ENCODE measurements at regions of chr2 and their contacts with region 1.

Region 1: DNA sequence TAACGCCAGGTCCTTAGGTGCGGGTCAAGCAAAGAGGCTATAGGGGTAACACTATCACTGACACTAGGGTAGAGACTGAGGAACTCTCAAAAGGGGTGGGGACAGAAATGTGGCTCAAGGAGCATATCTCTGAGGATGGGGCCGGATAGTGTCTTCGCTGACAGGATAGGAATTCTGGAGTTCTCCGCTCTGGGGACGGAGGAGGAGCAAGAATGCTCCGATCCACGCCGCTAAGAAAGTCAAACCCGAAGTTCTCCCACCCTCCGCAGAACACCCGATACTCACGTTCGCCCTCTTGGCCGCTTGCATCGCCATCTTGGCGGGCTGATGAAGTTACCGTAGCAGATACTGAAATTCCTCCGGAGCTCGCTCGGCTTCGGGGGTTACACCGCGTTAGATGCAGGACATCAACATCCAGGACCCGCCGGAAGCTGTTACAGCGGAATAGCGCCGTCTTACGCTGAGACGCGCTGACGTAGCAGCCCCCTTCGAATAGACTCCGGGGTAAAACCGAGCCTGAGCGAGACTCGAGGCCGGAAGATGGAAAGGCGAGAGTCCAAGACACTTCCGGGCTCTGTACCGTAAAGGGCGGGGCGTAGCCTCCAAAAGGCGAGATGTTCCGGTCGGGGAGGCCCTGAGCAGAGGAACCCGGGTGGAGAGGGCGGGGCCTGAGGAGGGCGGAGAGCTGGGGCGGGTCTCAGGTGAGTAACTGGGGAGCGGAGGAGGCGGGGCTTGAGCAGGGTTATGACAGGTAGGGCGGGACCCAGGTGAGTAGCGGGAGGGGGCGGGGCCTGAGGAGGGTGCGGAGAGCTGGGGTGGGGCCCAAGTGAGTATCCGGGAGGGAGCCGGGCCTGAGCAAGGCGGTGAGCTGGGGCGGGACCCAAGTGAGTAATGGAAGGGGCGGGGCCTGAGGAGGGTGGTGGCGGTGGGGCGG is at the start of gene SF3B6:
- DNase-seq: peak; percentile 99
- H3K4me3 ChIP-seq: peak within 1 kb of the TSS; percentile 52 to 88 (median 66)
- H3K27ac ChIP-seq: peak within 1 kb of the TSS; percentile 91 to 96 (median 92)
- H3K4me1 ChIP-seq: peaks cover 0 to 22% (median 20%) of the 10 kb centered on the region in 4 donors
- H3K27me3 ChIP-seq: no peaks in the 10 kb centered on the region
- CTCF ChIP-seq: no peak
- EP300 ChIP-seq: peak in 1 of 4 donors; percentile 70
- POLR2A ChIP-seq: peak; percentile 44 to 56
- total RNA-seq, gene SF3B6: 95.6 to 140 (median 135) TPM

Region 2: DNA sequence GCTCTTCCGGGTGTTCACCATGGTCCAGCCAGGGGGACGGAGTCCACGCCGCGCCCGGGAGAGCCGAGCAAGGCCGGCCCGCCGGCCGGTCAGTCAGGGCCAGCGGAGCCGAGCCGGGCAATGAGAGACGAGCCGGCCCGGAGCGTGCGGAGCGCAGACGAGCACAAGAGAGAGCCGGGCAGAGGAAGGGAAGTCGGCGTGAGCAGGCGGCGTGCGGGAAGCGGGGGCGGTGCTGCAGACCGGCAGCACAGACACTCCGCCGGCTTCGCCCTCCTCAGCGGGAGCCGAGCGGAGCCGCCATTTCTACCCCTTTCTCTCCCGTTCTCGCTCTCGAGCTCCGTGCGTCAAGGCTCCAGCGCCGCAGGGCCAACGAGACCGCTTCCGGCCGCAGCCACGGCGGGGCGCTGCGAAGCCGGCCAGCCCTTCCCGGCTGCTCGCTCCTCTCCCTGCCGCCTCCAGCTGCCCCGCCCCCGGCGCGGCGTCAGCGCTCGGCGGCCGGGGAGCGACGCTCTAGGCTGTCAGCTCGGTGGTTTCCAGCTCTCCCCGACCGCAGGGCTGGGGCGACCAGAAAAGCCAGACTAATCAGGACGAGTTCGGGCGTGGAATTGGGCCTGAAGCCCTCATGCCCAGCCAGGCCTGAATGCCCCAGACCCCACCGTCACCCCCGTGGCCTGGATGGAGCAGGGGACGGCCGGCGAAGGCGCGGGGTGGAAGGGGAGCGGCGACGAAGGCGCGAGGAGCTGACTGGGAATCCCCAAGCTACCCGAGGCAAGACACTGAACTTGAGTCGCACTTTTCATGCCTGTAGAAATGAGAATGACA is 149.2 kb before region 1 on chr2 and contains the start of gene ATAD2B:
- intact Hi-C with region 1: loop called (anchors 2 kb)
- DNase-seq: peak; percentile 95
- H3K4me3 ChIP-seq: peak within 1 kb of the TSS; percentile 66 to 93 (median 82)
- H3K27ac ChIP-seq: peak within 1 kb of the TSS; percentile 93 to 99 (median 95)
- H3K4me1 ChIP-seq: peaks cover 0 to 38% (median 28%) of the 10 kb centered on the region in 4 donors
- H3K27me3 ChIP-seq: no peaks in the 10 kb centered on the region
- CTCF ChIP-seq: peak; percentile 47 to 84 (median 51)
- EP300 ChIP-seq: no peak
- POLR2A ChIP-seq: peak; percentile 58 to 85
- total RNA-seq, gene ATAD2B: 19.7 to 22.5 (median 21.0) TPM

Region 3: GRCh38 chr2:23939987-23940717 is 136.0 kb before region 1 on chr2 and contains the start of gene UBXN2A:
- intact Hi-C with region 1: loop called (anchors 2 kb)
- DNase-seq: peak; percentile 82
- H3K4me3 ChIP-seq: peak within 1 kb of the TSS; percentile 63 to 98 (median 84)
- H3K27ac ChIP-seq: peak within 1 kb of the TSS; percentile 87 to 98 (median 94)
- H3K4me1 ChIP-seq: peaks cover 0 to 20% (median 14%) of the 10 kb centered on the region in 4 donors
- H3K27me3 ChIP-seq: no peaks in the 10 kb centered on the region
- CTCF ChIP-seq: no peak
- EP300 ChIP-seq: no peak
- POLR2A ChIP-seq: peak; percentile 22 to 30
- total RNA-seq, gene UBXN2A: 15.0 to 21.2 (median 16.3) TPM

Region 4: DNA sequence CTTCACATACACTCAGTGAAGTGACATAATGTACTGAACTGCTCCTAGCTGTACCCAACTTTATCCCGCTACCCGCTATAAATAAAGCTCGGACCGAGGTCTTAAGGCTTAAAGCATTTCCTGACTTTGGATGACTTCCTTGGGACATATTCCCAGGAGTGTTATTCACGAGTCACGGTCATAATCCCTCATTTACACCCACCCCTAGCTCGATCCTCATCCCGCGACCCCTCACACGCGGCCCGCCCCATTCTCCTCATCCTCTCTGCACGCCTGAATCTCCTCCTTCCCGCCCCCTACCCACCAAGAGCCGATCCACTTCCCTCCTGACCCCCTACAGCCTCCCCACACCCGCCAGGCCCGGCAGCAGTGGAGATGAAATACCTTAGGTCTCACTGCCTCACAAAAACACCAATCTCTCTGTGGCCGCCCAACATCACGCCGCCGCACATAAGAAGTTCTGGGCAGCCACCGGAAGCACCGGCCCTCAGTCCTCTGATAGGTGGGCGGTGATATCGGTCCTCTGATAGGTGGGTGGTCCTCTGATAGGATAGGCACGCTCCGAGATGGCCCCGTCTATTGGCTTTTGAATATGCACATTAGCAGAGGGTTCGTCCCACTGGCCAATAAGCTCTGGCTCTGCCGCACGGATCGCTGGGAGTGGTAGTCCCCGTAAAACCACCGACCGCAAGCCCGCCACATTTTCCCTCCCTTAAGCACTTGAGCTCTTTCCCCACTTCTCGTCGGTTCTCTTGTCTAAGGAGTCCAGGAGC is 29.1 kb before region 1 on chr2 and contains the start of gene WDCP:
- intact Hi-C with region 1: loop called (anchors 2 kb)
- DNase-seq: peak; percentile 99
- H3K4me3 ChIP-seq: peak within 1 kb of the TSS; percentile 48 to 80 (median 70)
- H3K27ac ChIP-seq: peak within 1 kb of the TSS; percentile 57 to 84 (median 74)
- H3K4me1 ChIP-seq: peaks cover 0 to 41% (median 28%) of the 10 kb centered on the region in 4 donors
- H3K27me3 ChIP-seq: no peaks in the 10 kb centered on the region
- CTCF ChIP-seq: no peak
- EP300 ChIP-seq: no peak
- POLR2A ChIP-seq: peak; percentile 51 to 55
- total RNA-seq, gene WDCP: 3.1 to 10.0 (median 6.6) TPM

Region 5: GRCh38 chr2:24123195-24123921 is 47.2 kb after region 1 on chr2 and contains the starts of genes FAM228B and PFN4:
- intact Hi-C with region 1: loop called (anchors 2 kb)
- DNase-seq: peak; percentile 95
- H3K4me3 ChIP-seq: peak within 1 kb of the TSS; percentile 46 to 68 (median 66)
- H3K27ac ChIP-seq: peak within 1 kb of the TSS; percentile 88 to 94 (median 92)
- H3K4me1 ChIP-seq: peaks cover 0 to 32% (median 15%) of the 10 kb centered on the region in 4 donors
- H3K27me3 ChIP-seq: no peaks in the 10 kb centered on the region
- CTCF ChIP-seq: no peak
- EP300 ChIP-seq: no peak
- POLR2A ChIP-seq: no peak
- total RNA-seq, gene FAM228B: 24.7 to 44.1 (median 37.2) TPM
- total RNA-seq, gene PFN4: 1.9 TPM in 1 of 4 donors, not detected in the others

Region 6: DNA sequence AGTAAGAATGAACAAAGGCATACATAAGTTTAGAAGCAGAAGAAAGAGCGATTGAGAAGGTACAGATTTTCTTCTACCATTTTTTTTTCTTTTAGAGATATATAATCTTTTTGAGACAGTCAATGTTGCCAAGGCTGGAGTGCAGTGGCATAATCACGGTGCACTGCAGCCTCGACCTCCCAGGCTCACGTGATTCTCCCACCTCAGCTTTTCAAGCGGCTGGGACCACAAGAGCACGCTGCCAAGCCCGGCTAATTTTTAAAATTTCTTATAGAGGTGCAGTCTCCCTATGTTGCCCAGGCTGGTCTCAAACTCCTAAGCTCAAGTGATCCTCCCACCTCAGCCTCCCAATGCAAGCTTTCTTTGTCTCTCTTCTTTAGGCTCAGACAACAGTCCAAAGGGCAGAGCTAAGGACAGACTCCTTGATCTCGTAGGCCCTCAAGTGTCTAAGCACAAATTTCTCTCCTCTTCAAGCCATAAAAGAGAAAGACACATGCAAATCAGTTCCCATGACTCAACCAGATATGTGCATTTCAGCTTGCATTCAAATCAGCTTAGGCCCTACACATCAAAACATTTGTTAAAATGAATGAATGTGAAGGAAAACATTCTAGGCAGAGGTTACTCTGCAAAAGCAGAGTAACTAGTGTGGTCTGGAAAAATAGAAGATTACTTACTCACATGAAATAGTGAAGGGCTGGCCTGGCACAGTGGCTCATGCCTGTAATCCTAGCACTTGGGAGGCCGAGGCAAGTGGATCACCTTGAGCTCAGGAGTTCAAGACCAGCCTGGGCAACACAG is 266.1 kb after region 1 on chr2:
- intact Hi-C with region 1: no loop called
- DNase-seq: no peak
- H3K4me3 ChIP-seq: no peak overlapping the region
- H3K27ac ChIP-seq: peak overlapping the region in 1 of 4 donors; percentile 7
- H3K4me1 ChIP-seq: peaks cover 0 to 41% (median 18%) of the 10 kb centered on the region in 4 donors
- H3K27me3 ChIP-seq: no peaks in the 10 kb centered on the region
- CTCF ChIP-seq: no peak
- EP300 ChIP-seq: no peak
- POLR2A ChIP-seq: no peak

Region 7: DNA sequence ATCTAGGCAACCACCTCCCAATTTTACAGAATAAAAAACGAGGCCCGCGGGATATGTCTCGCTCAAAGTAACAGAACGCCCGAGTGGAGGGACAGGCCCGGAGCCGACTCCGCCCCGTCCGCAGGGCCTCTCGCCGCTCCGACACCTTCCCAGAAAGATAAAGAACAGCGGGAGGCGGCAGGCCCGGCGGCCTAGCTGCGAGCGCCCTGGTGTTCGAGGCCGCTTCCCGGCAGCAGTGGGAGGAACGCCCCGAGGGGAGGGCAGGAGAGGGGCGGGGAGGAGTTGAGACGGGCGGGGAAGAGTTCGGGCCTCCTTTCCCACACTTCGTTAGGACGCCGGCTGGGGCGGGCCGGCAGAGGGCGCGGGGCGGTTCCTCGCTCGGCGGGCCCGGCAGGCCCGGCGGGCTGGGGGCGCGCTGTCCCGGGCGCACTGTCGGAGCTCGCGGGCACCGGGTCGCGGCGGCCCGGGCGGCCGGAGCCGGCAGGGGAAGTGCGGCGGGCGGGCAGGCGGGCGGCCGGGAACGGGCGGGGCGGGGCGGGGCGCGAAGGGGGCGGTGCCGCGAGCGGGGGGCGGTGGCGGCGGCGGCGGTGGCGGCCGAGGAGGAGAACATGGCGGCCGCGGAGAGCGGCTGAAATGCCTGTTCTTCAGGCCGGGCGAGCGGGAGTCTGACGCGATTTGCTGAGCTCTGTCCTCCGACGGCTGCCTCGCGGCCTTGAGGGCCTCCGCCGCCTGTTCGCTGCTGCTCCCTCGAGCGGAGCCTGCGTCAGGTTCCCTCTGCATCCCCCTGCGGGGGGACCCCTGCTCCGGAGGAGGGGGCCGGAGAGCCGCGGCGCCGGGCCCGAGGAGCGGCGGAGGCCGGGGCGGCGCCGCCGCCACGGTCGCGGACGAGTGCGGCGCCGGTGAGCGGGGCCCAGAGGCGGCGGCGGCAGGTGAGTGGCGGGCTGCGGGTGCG is 414.8 kb after region 1 on chr2 and contains the start of gene NCOA1:
- intact Hi-C with region 1: loop called (anchors 5 kb)
- DNase-seq: peak; percentile 95
- H3K4me3 ChIP-seq: peak within 1 kb of the TSS; percentile 87 to 96 (median 92)
- H3K27ac ChIP-seq: peak within 1 kb of the TSS; percentile 93 to 94 (median 94)
- H3K4me1 ChIP-seq: peaks cover 2 to 38% (median 30%) of the 10 kb centered on the region in 4 donors
- H3K27me3 ChIP-seq: no peaks in the 10 kb centered on the region
- CTCF ChIP-seq: no peak
- EP300 ChIP-seq: no peak
- POLR2A ChIP-seq: peak in 1 of 2 donors; percentile 47
- total RNA-seq, gene NCOA1: 49.2 to 61.7 (median 51.8) TPM